Tibial artery (tissue), 4 donors: ENCODE measurements at regions of chr7 and their contacts with region 1.

Region 1: GRCh38 chr7:149125863-149126661 is at the start of gene ZNF425:
- DNase-seq: peak; percentile 87 to 96
- H3K4me3 ChIP-seq: peak within 1 kb of the TSS; percentile 75 to 83
- H3K27ac ChIP-seq: peak within 1 kb of the TSS; percentile 98 to 99
- H3K4me1 ChIP-seq: peaks cover 0 to 16% (median 9%) of the 10 kb centered on the region in 4 donors
- H3K27me3 ChIP-seq: no peaks in the 10 kb centered on the region
- CTCF ChIP-seq: peak; percentile 96 to 98

Region 2: DNA sequence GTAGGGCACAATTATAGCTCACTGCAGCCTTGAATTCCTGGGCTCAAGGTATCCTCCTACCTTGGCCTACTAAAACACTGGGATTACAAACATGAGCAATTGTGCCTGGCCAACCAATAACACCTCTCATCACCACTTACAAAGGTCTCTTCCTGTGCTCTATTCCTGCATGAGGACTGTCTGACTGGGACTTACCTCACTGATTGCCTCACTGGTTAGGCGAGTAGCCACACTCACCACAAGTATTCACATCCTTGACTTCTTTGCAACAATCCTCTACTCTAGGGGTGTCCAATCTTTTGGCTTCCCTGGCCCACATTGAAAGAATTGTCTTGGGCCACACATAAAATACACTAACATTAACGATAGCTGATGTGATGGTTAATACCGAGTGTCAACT is 75.1 kb before region 1 on chr7:
- intact Hi-C with region 1: no loop called
- DNase-seq: no peak
- H3K4me3 ChIP-seq: no peak overlapping the region
- H3K27ac ChIP-seq: no peak overlapping the region
- H3K4me1 ChIP-seq: peaks cover 0 to 8% (median 0%) of the 10 kb centered on the region in 4 donors
- H3K27me3 ChIP-seq: no peaks in the 10 kb centered on the region
- CTCF ChIP-seq: no peak

Region 3: DNA sequence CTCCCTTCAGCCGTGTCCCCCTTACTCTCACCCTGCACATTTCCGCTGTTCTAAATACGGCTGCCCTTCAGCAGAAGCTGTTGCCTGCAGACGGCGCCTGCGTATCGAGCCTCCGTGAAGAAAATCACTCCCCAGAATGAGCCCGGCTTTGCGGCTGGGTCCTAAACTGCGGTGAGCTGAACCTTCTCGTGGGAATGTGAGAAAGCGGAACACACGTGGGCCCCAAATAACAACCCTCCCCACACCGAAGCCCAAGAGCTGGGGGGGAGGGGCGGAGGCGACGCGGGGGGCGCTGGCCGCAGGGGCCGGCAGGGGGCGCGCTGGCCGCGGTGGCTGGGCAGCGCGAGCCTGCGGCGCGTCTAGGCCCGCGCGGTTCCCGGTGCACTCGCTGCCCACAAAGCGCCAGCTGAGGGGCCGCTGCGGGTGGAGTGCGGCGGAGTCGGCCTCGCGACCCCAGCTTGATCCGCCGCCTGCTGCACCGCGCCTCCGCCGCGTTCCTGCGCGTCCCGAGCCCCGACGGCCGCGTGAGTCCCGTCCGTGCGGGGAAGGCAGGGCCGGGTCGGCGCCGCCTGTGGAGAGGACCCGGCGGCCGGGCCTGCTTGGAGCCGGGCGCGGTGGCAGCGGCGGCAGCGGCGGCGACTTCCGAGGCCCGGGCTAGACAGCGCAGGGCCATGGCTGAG is 21.1 kb after region 1 on chr7 and contains the start of gene ZNF398:
- intact Hi-C with region 1: loop called (anchors 2 kb)
- DNase-seq: peak; percentile 52 to 84
- H3K4me3 ChIP-seq: peak within 1 kb of the TSS; percentile 68 to 98
- H3K27ac ChIP-seq: peak within 1 kb of the TSS; percentile 86 to 93
- H3K4me1 ChIP-seq: peaks cover 0 to 21% (median 11%) of the 10 kb centered on the region in 4 donors
- H3K27me3 ChIP-seq: no peaks in the 10 kb centered on the region
- CTCF ChIP-seq: peak; percentile 65 to 74

Region 4: DNA sequence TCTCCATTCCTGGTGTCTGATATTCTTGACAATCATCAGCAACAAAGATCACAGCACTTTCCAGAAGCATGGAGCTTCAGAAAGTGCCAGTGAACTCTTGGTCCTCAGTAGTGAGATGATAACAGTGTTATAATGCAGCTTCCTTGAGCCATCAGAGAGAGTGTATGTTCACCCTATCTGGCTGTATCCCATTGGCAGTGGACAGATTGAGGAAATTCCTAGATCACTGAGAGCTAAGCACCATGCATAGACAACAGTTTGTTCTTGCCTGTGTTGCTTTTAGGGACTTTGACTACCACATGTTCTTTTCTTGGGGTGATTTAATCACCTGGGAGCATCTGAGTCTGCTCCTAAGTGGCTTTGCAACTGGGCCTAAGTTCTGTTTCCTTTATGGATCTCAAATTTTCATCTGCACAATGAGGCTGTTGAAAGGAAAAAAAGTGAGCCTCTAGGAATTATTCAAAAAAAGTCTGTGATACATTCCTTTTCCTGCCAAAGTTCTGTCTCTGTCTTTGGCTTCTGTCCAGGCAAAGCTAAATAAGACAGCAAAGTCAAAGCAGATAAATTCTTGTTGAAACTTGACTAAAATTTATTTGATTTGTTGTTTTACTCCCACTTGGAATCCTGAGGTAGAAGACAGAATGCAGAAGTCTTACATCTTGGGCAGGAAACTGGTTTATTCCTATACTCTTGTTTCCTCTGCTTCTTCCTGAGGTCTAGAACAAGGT is 54.8 kb after region 1 on chr7:
- intact Hi-C with region 1: no loop called
- DNase-seq: no peak
- H3K4me3 ChIP-seq: no peak overlapping the region
- H3K27ac ChIP-seq: no peak overlapping the region
- H3K4me1 ChIP-seq: peaks cover 0 to 5% (median 0%) of the 10 kb centered on the region in 4 donors
- H3K27me3 ChIP-seq: no peaks in the 10 kb centered on the region
- CTCF ChIP-seq: no peak